A549 (cell line): ENCODE measurements at regions of chr17 and their contacts with region 1.

Region 1: DNA sequence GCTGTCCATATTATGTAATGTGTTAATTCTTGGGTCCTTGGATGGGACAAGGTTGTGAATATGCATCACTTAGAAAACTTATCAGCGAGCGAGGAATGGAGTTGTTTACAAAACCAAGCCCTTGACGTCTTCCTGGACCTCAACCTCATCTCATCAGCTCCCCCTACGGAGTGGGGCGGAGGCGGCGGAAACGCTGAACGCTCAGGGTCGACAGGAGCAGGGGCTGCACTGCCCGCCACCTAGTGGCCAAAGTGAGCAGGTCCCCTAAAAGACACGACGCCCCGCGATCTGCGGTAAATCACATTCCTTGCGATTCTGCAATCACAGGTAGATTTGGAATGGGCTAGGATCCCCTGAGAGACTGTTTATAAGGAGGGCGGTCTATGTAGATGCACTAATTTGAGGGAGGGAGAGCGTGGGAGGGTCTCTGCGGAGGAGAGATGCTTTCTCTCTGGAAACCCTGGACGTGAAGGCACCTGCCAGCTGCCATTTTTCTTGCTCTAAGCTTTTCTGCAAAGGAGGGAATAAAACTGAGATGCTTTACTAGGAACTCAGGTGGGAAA is 5.4 kb upstream of the ICAM2 start:
- DNase-seq: peak; percentile 81 to 87
- ATAC-seq: peak; percentile 93 to 95
- H3K4me3 ChIP-seq: peak overlapping the region; percentile 35
- H3K27ac ChIP-seq: peak overlapping the region in 1 of 2 experiments; percentile 21; a peak in 1 of 6 replicates
- H3K4me1 ChIP-seq: peaks cover 3% of the 10 kb centered on the region; the same call in 1 of the 3 replicates
- CTCF ChIP-seq: peak; percentile 99
- EP300 ChIP-seq: no peak
- POLR2A ChIP-seq: no peak
- RAD21 ChIP-seq: peak; percentile 77 to 80

Region 2: DNA sequence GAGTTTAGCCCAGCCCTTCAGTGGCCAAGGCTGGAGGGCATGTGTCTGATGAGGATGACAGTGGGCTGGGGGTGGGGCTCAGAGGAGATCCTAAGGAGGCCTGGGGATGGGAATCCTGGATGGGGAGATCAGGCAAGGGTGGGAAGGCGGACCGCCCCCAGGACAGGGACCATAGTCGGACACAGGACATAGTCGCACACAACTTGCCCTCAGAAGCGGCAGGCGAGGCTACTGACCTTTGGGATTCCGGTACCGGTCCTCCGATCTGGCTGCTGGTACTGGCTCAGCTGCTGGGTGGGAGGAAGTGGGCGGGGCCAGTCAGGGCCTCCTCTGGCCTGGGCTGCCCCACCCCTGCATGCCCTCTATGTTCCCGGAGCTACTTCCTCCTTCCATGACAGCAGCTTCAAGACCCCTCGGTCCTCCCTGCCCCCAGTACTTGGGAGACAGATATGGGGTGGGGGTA is 94.7 kb before region 1 on chr17:
- CTCF ChIA-PET with region 1: interaction called, 12 read pairs
- POLR2A ChIA-PET with region 1: no interaction called
- DNase-seq: no peak
- ATAC-seq: peak in 1 of 2 experiments; percentile 41; a peak in 3 of 6 replicates
- H3K4me3 ChIP-seq: no peak overlapping the region
- H3K27ac ChIP-seq: no peak overlapping the region
- H3K4me1 ChIP-seq: no peaks in the 10 kb centered on the region
- CTCF ChIP-seq: no peak
- EP300 ChIP-seq: no peak
- POLR2A ChIP-seq: no peak
- RAD21 ChIP-seq: no peak

Region 3: GRCh38 chr17:63984651-63985386 is 41.0 kb before region 1 on chr17:
- CTCF ChIA-PET with region 1: interaction called, 20 read pairs
- POLR2A ChIA-PET with region 1: no interaction called
- DNase-seq: peak in 1 of 2 experiments; percentile 41
- ATAC-seq: no peak
- H3K4me3 ChIP-seq: no peak overlapping the region
- H3K27ac ChIP-seq: no peak overlapping the region
- H3K4me1 ChIP-seq: peaks cover 6% of the 10 kb centered on the region; the same call in 1 of the 3 replicates
- CTCF ChIP-seq: no peak
- EP300 ChIP-seq: no peak
- POLR2A ChIP-seq: no peak
- RAD21 ChIP-seq: no peak

Region 4: DNA sequence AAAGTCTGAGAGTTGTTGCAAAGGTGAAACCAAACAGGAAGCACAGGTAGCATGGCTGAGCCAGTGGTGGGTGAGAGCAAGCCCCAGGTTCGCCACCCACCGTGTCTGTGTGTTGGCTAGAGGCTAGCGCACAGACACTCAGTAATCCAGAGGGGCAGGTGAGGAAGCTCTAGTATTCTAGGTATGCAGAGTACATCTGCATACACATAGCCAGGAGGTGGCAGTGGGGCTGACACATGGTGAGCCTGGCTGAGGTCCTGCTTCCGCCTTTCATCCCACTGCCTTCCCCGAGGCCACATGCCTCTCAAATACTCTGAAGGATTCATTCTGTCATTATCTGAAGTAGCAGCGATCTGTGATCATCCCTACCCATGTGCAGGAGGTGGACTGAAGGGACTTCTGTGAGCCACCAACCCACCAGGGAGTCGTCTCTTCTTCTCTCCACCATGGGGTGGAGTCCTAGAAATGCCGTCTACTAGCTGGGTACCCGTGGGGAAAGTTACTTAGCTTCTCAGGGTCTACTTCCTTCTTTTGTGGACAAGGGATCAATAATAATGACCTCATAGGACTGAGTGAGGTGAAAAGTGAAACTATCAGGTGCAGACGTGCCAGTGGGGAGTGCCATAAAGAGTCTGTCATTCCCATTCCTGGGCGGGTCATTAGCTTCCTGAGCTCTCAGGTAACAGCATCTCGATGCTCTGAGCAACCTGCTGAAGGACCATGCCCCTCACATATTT is 30.6 kb after region 1 on chr17:
- CTCF ChIA-PET with region 1: interaction called, 206 read pairs
- POLR2A ChIA-PET with region 1: no interaction called
- DNase-seq: no peak
- ATAC-seq: peak in 1 of 2 experiments; percentile 28; a peak in 3 of 6 replicates
- H3K4me3 ChIP-seq: no peak overlapping the region
- H3K27ac ChIP-seq: peak overlapping the region in 1 of 2 experiments; percentile 11; a peak in 1 of 6 replicates
- H3K4me1 ChIP-seq: peaks cover 29% of the 10 kb centered on the region
- CTCF ChIP-seq: no peak
- EP300 ChIP-seq: no peak
- POLR2A ChIP-seq: no peak
- RAD21 ChIP-seq: no peak

Region 5: DNA sequence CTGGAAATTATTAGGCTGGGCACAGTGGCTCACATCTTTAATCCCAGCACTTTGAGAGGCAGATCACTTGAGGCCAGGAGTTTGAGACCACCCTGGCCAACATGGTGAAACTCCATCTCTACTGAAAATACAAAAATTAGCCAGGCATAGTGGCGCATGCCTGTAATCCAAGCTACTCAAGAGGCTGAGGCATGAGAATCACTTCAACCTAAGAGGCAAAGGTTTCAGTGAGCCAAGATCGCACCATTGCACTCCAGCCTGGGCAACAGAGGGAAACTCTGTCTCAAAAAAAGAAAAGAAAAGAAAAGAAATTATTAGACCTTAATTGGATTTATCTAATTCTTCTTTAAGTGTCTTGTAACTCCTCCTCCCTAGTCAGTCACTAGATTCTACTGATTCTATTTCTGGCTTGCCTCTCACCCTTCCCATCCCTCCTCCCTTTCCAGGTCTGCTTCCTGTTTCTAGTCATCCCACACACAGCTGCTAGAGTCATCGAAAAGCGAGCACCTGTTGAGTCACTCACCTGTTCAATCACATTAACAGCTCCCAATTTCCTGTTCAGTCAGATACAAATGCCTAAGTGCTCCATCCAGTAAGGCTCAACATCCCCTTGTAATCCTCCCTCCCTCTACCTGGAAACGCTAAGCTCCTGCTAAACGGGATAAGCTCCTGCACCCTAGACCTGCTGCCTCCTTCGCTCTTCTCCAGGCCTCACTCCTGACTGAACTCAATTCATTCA is 69.5 kb after region 1 on chr17:
- CTCF ChIA-PET with region 1: interaction called, 21 read pairs
- POLR2A ChIA-PET with region 1: no interaction called
- DNase-seq: no peak
- ATAC-seq: no peak
- H3K4me3 ChIP-seq: no peak overlapping the region
- H3K27ac ChIP-seq: no peak overlapping the region
- H3K4me1 ChIP-seq: peaks cover 9% of the 10 kb centered on the region; the same call in 2 of the 3 replicates
- CTCF ChIP-seq: no peak
- EP300 ChIP-seq: no peak
- POLR2A ChIP-seq: no peak
- RAD21 ChIP-seq: no peak

Region 6: GRCh38 chr17:64250233-64250835 is 224.5 kb after region 1 on chr17:
- CTCF ChIA-PET with region 1: interaction called, 11 read pairs
- POLR2A ChIA-PET with region 1: no interaction called
- DNase-seq: no peak
- ATAC-seq: no peak
- H3K4me3 ChIP-seq: no peak overlapping the region
- H3K27ac ChIP-seq: no peak overlapping the region
- H3K4me1 ChIP-seq: peaks cover 2% of the 10 kb centered on the region; the same call in 2 of the 3 replicates
- CTCF ChIP-seq: no peak
- EP300 ChIP-seq: no peak
- POLR2A ChIP-seq: no peak
- RAD21 ChIP-seq: no peak

Region 7: DNA sequence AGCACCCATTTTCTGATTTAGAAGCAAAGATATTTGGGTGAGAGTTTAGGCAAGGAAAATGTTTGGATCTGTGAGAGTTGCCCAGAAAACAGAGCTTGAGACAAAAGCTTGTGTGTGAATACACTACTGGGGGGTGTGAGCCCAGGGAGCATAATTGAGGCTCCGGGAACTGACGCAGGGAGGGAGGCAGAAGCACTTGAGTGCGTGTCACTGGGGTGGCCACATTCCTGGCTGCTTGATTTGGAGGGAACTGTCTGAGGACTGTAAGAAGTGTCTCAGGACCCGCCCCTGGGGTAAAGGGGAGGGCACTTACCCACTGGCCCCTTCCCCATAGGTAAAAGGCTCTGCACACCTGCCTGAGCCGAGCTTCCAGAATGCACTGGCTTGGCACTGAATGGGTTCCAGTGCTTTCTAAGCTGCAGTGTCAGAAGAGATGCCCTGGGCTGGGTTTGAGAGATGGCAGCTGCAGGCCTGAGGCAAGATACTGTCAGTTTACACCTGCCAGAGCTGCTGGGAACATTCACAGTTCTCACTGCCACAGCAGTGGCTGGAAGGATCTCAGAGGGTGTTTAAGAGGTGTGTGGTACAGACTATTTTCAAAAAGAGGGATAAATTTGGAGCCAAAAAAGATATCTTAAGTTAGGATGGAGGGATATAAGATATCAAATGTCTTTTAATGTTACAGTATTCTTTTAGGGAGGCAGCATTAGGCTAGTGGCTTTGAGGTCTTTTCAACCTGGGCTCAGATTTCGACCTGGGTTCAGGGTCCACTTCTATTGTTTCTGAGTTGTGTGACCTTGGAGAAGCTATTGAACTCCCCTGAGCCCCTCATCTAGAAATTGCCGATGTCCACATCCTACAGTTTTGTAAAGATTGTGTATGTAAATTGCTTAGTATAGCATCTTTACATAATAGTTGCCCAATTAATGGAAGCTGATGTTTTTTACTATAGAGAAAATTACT is 244.2 kb after region 1 on chr17:
- CTCF ChIA-PET with region 1: no interaction called
- POLR2A ChIA-PET with region 1: no interaction called
- DNase-seq: no peak
- ATAC-seq: no peak
- H3K4me3 ChIP-seq: no peak overlapping the region
- H3K27ac ChIP-seq: no peak overlapping the region
- H3K4me1 ChIP-seq: no peaks in the 10 kb centered on the region
- CTCF ChIP-seq: no peak
- EP300 ChIP-seq: no peak
- POLR2A ChIP-seq: no peak
- RAD21 ChIP-seq: no peak